ENCODE measurements at regions of chr2 and their contacts with region 1.

Region 1: DNA sequence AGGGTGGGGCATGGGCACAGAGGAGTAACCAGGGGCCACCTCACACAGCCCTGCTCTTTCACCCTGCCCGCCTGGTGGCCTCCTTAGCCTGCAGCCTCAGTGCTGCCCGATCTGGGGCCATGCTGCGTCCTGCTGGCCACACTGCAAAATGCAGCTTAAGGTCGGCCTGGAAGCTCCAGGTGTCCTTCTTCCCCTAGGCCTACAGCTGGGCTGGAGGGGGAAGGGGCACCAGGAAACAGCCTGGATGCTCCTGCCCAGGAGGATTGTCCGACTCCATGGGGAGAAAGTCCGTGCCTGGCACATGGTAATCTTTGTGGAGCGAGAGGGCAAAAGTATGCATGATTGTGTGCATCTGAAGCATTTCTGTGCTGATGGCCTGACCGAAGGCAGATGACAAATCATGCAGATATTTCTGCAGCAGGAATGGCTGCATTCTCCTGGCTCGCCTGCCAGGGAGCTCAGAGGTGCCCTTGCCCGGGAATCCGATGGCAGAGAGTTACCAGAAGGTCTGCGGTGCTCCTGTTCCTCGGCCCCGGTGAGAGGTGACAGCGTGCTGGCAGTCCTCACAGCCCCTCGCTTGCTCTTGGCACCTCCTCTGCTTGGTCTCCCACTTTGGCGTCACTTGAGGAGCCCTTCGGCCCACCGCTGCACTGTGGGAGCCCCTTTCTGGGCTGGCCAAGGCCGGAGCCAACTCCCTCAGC is 12.8 kb upstream of the ALPP start:
- DNase-seq: peak; percentile 78 to 84
- H3K4me3 ChIP-seq: no peak overlapping the region
- H3K27ac ChIP-seq: peak overlapping the region; percentile 52
- H3K4me1 ChIP-seq: peaks cover 12% of the 10 kb centered on the region
- H3K27me3 ChIP-seq: no peaks in the 10 kb centered on the region
- CTCF ChIP-seq: peak; percentile 72

Region 2: GRCh38 chr2:232420463-232421188 is 54.9 kb after region 1 on chr2:
- CTCF ChIA-PET with region 1: interaction called, 4 read pairs
- POLR2A ChIA-PET with region 1: interaction called, 4 read pairs
- intact Hi-C with region 1: loop called (anchors 5 kb)
- DNase-seq: peak; percentile 52 to 70
- H3K4me3 ChIP-seq: peak overlapping the region; percentile 58
- H3K27ac ChIP-seq: peak overlapping the region; percentile 81
- H3K4me1 ChIP-seq: peaks cover 11% of the 10 kb centered on the region
- H3K27me3 ChIP-seq: no peaks in the 10 kb centered on the region
- CTCF ChIP-seq: no peak

Region 3: GRCh38 chr2:232438951-232439757 is 73.4 kb after region 1 on chr2:
- CTCF ChIA-PET with region 1: no interaction called
- POLR2A ChIA-PET with region 1: no interaction called
- intact Hi-C with region 1: loop called (anchors 5 kb)
- DNase-seq: peak in 1 of 2 experiments; percentile 60
- H3K4me3 ChIP-seq: no peak overlapping the region
- H3K27ac ChIP-seq: no peak overlapping the region
- H3K4me1 ChIP-seq: peaks cover 10% of the 10 kb centered on the region
- H3K27me3 ChIP-seq: no peaks in the 10 kb centered on the region
- CTCF ChIP-seq: peak; percentile 65

Measured in PC-9 (cell line).